B cell (primary cell): ENCODE measurements at regions of chr19 and their contacts with region 1.

Region 1: GRCh38 chr19:41548954-41549688 is 26.8 kb upstream of the CEACAM21 start:
- DNase-seq: peak; percentile 81
- ATAC-seq: peak; percentile 59
- H3K4me3 ChIP-seq: peak overlapping the region; percentile 63 to 98 (median 77)
- H3K4me3 Mint-ChIP-seq: peak overlapping the region; percentile 96
- H3K27ac ChIP-seq: peak overlapping the region; percentile 57 to 92
- H3K27ac Mint-ChIP-seq: peak overlapping the region; percentile 98
- H3K4me1 ChIP-seq: peaks cover 66 to 73% of the 10 kb centered on the region in 2 donors
- H3K4me1 Mint-ChIP-seq: peaks cover 71% of the 10 kb centered on the region
- H3K27me3 ChIP-seq: no peaks in the 10 kb centered on the region
- H3K27me3 Mint-ChIP-seq: no peaks in the 10 kb centered on the region
- CTCF ChIP-seq: no peak

Region 2: DNA sequence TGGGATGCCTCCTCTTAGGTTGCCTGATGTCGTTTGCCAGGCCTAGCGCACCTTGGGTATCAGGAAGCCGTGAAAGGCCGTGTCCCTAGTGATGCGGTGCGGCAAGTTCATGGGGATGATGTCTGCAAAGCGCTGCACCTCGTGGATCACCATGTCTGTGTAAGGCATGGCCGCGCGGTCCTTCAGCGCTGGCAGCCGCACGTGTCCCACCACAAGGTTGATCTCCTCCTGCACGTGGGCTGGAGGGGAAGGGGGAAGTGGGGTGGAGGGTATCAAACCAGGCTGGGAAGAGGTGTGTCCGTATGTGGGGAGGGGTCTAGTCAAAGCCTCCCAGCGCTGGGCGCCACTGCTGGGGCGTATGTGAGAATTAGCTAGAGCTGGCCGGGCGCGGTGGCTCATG is 727.0 kb before region 1 on chr19:
- CTCF ChIA-PET with region 1: no interaction called
- POLR2A ChIA-PET with region 1: interaction called, 10 read pairs
- intact Hi-C with region 1: no loop called
- DNase-seq: no peak
- ATAC-seq: no peak
- H3K4me3 ChIP-seq: no peak overlapping the region
- H3K4me3 Mint-ChIP-seq: no peak overlapping the region
- H3K27ac ChIP-seq: no peak overlapping the region
- H3K27ac Mint-ChIP-seq: no peak overlapping the region
- H3K4me1 ChIP-seq: peaks cover 14 to 28% of the 10 kb centered on the region in 2 donors
- H3K4me1 Mint-ChIP-seq: peaks cover 29% of the 10 kb centered on the region
- H3K27me3 ChIP-seq: no peaks in the 10 kb centered on the region
- H3K27me3 Mint-ChIP-seq: no peaks in the 10 kb centered on the region
- CTCF ChIP-seq: no peak

Region 3: GRCh38 chr19:41505105-41505504 is 44.0 kb before region 1 on chr19:
- CTCF ChIA-PET with region 1: no interaction called
- POLR2A ChIA-PET with region 1: no interaction called
- intact Hi-C with region 1: no loop called
- DNase-seq: no peak
- ATAC-seq: no peak
- H3K4me3 ChIP-seq: no peak overlapping the region
- H3K4me3 Mint-ChIP-seq: no peak overlapping the region
- H3K27ac ChIP-seq: no peak overlapping the region
- H3K27ac Mint-ChIP-seq: no peak overlapping the region
- H3K4me1 ChIP-seq: no peaks in the 10 kb centered on the region
- H3K4me1 Mint-ChIP-seq: peaks cover 3% of the 10 kb centered on the region
- H3K27me3 ChIP-seq: peaks cover 0 to 19% (median under 1%) of the 10 kb centered on the region in 4 experiments
- H3K27me3 Mint-ChIP-seq: peaks cover 36% of the 10 kb centered on the region
- CTCF ChIP-seq: no peak

Region 4: GRCh38 chr19:41606215-41606837 is 57.2 kb after region 1 on chr19:
- CTCF ChIA-PET with region 1: no interaction called
- POLR2A ChIA-PET with region 1: no interaction called
- intact Hi-C with region 1: no loop called
- DNase-seq: no peak
- ATAC-seq: no peak
- H3K4me3 ChIP-seq: no peak overlapping the region
- H3K4me3 Mint-ChIP-seq: no peak overlapping the region
- H3K27ac ChIP-seq: no peak overlapping the region
- H3K27ac Mint-ChIP-seq: no peak overlapping the region
- H3K4me1 ChIP-seq: no peaks in the 10 kb centered on the region
- H3K4me1 Mint-ChIP-seq: no peaks in the 10 kb centered on the region
- H3K27me3 ChIP-seq: peaks cover 0 to 6% (median 3%) of the 10 kb centered on the region in 4 experiments
- H3K27me3 Mint-ChIP-seq: peaks cover 32% of the 10 kb centered on the region
- CTCF ChIP-seq: no peak